ENCODE measurements at regions of chr16 and their contacts with region 1.

Region 1: DNA sequence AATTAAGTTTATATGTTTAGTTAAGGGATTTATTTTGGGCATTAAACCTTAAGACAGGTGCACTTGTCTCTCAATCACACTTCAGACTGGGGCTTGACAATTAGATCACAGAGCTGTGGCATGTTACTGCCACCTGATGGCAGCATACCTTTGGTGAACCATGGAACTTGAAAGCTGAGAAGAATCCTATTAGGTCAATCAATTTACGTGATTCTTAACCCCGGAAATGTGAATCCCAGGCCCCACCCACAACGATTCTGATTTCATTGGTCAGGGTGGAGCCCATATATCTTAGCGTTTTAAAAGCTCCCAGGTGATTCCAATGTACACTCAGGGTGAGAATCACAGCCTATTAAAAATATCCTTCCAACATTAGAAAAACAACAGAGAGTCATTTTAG is 91.0 kb downstream of the GSG1L start:
- DNase-seq: peak; percentile 32
- H3K4me3 Mint-ChIP-seq: no peak overlapping the region
- H3K27ac Mint-ChIP-seq: no peak overlapping the region
- H3K4me1 Mint-ChIP-seq: no peaks in the 10 kb centered on the region
- H3K27me3 Mint-ChIP-seq: peaks cover 7% of the 10 kb centered on the region

Region 2: GRCh38 chr16:28218104-28218503 is 245.6 kb after region 1 on chr16:
- intact Hi-C with region 1: loop called (anchors 5 kb)
- DNase-seq: peak; percentile 53
- H3K4me3 Mint-ChIP-seq: no peak overlapping the region
- H3K27ac Mint-ChIP-seq: no peak overlapping the region
- H3K4me1 Mint-ChIP-seq: no peaks in the 10 kb centered on the region
- H3K27me3 Mint-ChIP-seq: no peaks in the 10 kb centered on the region